ENCODE measurements at regions of chr14 and their contacts with region 1.

Region 1: DNA sequence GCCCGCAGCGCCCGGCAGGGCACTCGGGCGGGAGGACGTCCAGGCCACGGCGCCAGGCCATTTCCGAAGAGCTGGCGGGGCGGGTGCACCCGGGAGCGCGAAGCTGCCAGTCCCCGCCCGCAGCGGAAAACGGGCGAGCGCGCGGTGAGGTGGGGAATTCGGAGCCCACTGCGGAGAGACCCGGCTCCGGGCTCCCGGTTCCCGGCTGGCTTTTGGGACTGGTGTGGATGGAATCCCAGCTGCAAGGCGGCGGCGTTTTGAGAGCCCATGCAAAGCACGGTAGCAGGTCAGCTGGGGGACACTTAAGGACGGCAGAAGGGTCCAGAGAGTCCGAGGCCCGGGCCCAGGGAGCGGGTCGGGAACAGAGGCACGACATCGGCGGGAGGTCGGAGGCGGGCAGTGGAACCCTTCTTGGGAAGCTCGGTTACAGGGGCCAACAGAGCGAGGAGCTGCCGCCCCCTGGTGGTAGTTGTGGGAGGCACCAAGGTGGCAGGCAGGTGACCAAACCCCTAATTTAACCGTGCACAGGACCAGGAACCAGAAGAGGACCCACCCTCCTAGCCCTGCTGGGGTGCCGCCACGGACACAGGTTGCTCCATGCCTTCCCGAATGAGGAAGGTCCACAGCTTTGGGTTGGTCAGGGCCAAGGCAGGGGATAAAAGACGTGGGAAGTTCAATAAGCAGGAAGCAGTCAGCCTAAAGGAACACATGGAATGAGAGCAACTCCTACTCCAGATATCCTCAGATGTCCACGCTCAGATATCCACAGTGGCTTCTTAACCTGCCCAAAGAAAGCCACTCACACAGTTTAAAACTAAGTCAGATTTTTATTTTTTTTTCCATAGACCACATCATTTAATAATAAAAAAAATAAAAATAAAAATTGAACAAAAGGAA is 685 bp upstream of the CDH24 start:
- DNase-seq: peak; percentile 70 to 92 (median 88)
- ATAC-seq: peak; percentile 70
- H3K4me3 ChIP-seq: peak overlapping the region; percentile 56 to 84
- H3K4me3 Mint-ChIP-seq: peak overlapping the region; percentile 87
- H3K27ac ChIP-seq: no peak overlapping the region
- H3K27ac Mint-ChIP-seq: peak overlapping the region; percentile 18
- H3K4me1 ChIP-seq: peaks cover 10% of the 10 kb centered on the region
- H3K4me1 Mint-ChIP-seq: peaks cover 17% of the 10 kb centered on the region
- H3K27me3 ChIP-seq: no peaks in the 10 kb centered on the region
- H3K27me3 Mint-ChIP-seq: no peaks in the 10 kb centered on the region
- CTCF ChIP-seq: peak; percentile 95

Region 2: GRCh38 chr14:22829661-22830442 is 228.2 kb before region 1 on chr14 and contains the start of gene MRPL52:
- CTCF ChIA-PET with region 1: no interaction called
- POLR2A ChIA-PET with region 1: no interaction called
- intact Hi-C with region 1: loop called in 1 of 2 experiments (anchors 10 kb)
- DNase-seq: peak; percentile 81 to 97 (median 90)
- ATAC-seq: peak; percentile 95
- H3K4me3 ChIP-seq: peak within 1 kb of the TSS; percentile 89 to 91
- H3K4me3 Mint-ChIP-seq: peak within 1 kb of the TSS; percentile 92
- H3K27ac ChIP-seq: peak within 1 kb of the TSS; percentile 69 to 90
- H3K27ac Mint-ChIP-seq: peak within 1 kb of the TSS; percentile 96
- H3K4me1 ChIP-seq: peaks cover 13% of the 10 kb centered on the region
- H3K4me1 Mint-ChIP-seq: peaks cover 31% of the 10 kb centered on the region
- H3K27me3 ChIP-seq: peaks cover 0 to 5% of the 10 kb centered on the region in 2 experiments
- H3K27me3 Mint-ChIP-seq: peaks cover 7% of the 10 kb centered on the region
- CTCF ChIP-seq: no peak
- total RNA-seq, gene MRPL52: 22.3 to 25.7 TPM

Region 3: GRCh38 chr14:22994762-22995275 is 63.2 kb before region 1 on chr14:
- CTCF ChIA-PET with region 1: interaction called, 1,218 read pairs
- POLR2A ChIA-PET with region 1: interaction called, 13 read pairs
- intact Hi-C with region 1: loop called (anchors 1 kb)
- DNase-seq: peak in 7 of 9 experiments; percentile 13 to 63 (median 46)
- ATAC-seq: peak; percentile 85
- H3K4me3 ChIP-seq: no peak overlapping the region
- H3K4me3 Mint-ChIP-seq: no peak overlapping the region
- H3K27ac ChIP-seq: no peak overlapping the region
- H3K27ac Mint-ChIP-seq: no peak overlapping the region
- H3K4me1 ChIP-seq: peaks cover 3% of the 10 kb centered on the region
- H3K4me1 Mint-ChIP-seq: peaks cover 5% of the 10 kb centered on the region
- H3K27me3 ChIP-seq: no peaks in the 10 kb centered on the region
- H3K27me3 Mint-ChIP-seq: no peaks in the 10 kb centered on the region
- CTCF ChIP-seq: peak; percentile 46

Region 4: GRCh38 chr14:23025151-23025814 is 32.7 kb before region 1 on chr14:
- CTCF ChIA-PET with region 1: interaction called, 69 read pairs
- POLR2A ChIA-PET with region 1: interaction called, 3 read pairs
- intact Hi-C with region 1: no loop called
- DNase-seq: no peak
- ATAC-seq: no peak
- H3K4me3 ChIP-seq: no peak overlapping the region
- H3K4me3 Mint-ChIP-seq: no peak overlapping the region
- H3K27ac ChIP-seq: no peak overlapping the region
- H3K27ac Mint-ChIP-seq: peak overlapping the region; percentile 72
- H3K4me1 ChIP-seq: peaks cover 32% of the 10 kb centered on the region
- H3K4me1 Mint-ChIP-seq: peaks cover 66% of the 10 kb centered on the region
- H3K27me3 ChIP-seq: no peaks in the 10 kb centered on the region
- H3K27me3 Mint-ChIP-seq: no peaks in the 10 kb centered on the region
- CTCF ChIP-seq: no peak

Region 5: GRCh38 chr14:23068476-23069412 is 10.7 kb after region 1 on chr14:
- CTCF ChIA-PET with region 1: interaction called, 48 read pairs
- POLR2A ChIA-PET with region 1: interaction called, 10 read pairs
- intact Hi-C with region 1: no loop called
- DNase-seq: peak; percentile 52 to 90 (median 73)
- ATAC-seq: peak; percentile 76
- H3K4me3 ChIP-seq: no peak overlapping the region
- H3K4me3 Mint-ChIP-seq: no peak overlapping the region
- H3K27ac ChIP-seq: no peak overlapping the region
- H3K27ac Mint-ChIP-seq: peak overlapping the region; percentile 39
- H3K4me1 ChIP-seq: peaks cover 28% of the 10 kb centered on the region
- H3K4me1 Mint-ChIP-seq: peaks cover 46% of the 10 kb centered on the region
- H3K27me3 ChIP-seq: no peaks in the 10 kb centered on the region
- H3K27me3 Mint-ChIP-seq: no peaks in the 10 kb centered on the region
- CTCF ChIP-seq: peak; percentile 99

Region 6: GRCh38 chr14:23101213-23101970 is 43.4 kb after region 1 on chr14:
- CTCF ChIA-PET with region 1: no interaction called
- POLR2A ChIA-PET with region 1: no interaction called
- intact Hi-C with region 1: no loop called
- DNase-seq: no peak
- ATAC-seq: no peak
- H3K4me3 ChIP-seq: no peak overlapping the region
- H3K4me3 Mint-ChIP-seq: no peak overlapping the region
- H3K27ac ChIP-seq: no peak overlapping the region
- H3K27ac Mint-ChIP-seq: no peak overlapping the region
- H3K4me1 ChIP-seq: peaks cover 17% of the 10 kb centered on the region
- H3K4me1 Mint-ChIP-seq: peaks cover 30% of the 10 kb centered on the region
- H3K27me3 ChIP-seq: no peaks in the 10 kb centered on the region
- H3K27me3 Mint-ChIP-seq: no peaks in the 10 kb centered on the region
- CTCF ChIP-seq: no peak

Measured in CD8-positive, alpha-beta T cell (primary cell).